ENCODE measurements at regions of chr1 and their contacts with region 1.

Region 1: GRCh38 chr1:23959041-23959460 is 577 bp upstream of the PNRC2 start:
- DNase-seq: peak; percentile 95
- H3K4me3 Mint-ChIP-seq: peak overlapping the region; percentile 100
- H3K27ac Mint-ChIP-seq: peak overlapping the region; percentile 100
- H3K4me1 Mint-ChIP-seq: peaks cover 55% of the 10 kb centered on the region
- H3K27me3 Mint-ChIP-seq: peaks cover 2% of the 10 kb centered on the region

Region 2: GRCh38 chr1:23790696-23791515 is 168.1 kb before region 1 on chr1 and contains the start of gene LYPLA2:
- CTCF ChIA-PET with region 1: interaction called, 3 read pairs
- POLR2A ChIA-PET with region 1: interaction called, 12 read pairs
- DNase-seq: peak; percentile 90
- H3K4me3 Mint-ChIP-seq: peak within 1 kb of the TSS; percentile 94
- H3K27ac Mint-ChIP-seq: peak within 1 kb of the TSS; percentile 91
- H3K4me1 Mint-ChIP-seq: peaks cover 32% of the 10 kb centered on the region
- H3K27me3 Mint-ChIP-seq: no peaks in the 10 kb centered on the region
- total RNA-seq, gene LYPLA2: 76.1 to 80.8 TPM

Region 3: GRCh38 chr1:23800400-23801337 is 158.4 kb before region 1 on chr1 and contains the start of gene GALE:
- CTCF ChIA-PET with region 1: no interaction called
- POLR2A ChIA-PET with region 1: interaction called, 28 read pairs
- DNase-seq: peak; percentile 98
- H3K4me3 Mint-ChIP-seq: peak within 1 kb of the TSS; percentile 96
- H3K27ac Mint-ChIP-seq: peak within 1 kb of the TSS; percentile 95
- H3K4me1 Mint-ChIP-seq: peaks cover 25% of the 10 kb centered on the region
- H3K27me3 Mint-ChIP-seq: no peaks in the 10 kb centered on the region
- total RNA-seq, gene GALE: 33.5 to 37.6 TPM

Region 4: DNA sequence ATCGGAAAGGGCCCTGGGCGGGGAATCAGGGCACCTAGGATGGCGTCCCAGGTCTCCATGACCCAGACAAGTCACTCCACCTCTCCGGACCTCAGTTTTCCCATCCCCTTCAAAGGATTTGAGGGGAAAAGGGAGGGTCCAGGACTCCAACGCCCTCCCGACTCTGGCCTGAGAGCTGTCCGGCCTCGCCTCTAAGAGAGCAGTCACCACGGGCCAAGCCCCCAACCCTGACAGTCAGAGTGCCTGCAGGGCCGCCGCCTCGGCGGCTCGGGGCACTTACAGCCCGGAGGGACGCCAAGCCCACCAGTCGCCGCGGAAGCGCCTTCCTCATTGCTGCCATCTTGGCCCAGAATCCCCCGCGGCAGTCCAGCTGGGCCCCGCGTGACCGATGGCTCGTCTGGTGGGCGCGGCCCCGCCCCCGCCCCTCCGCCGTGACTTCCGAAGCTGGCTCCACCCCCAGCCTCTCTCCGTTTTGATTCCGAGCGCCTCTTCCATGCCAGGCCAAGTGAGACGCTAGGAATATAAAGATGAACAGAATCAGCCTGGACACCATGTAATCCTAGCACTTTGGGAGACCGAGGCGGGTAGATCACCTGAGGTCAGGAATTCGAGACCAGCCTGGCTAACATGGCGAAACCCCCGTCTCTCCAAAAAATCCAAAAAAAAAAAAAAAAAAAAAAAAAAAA is 133.8 kb before region 1 on chr1 and contains the start of gene HMGCL:
- CTCF ChIA-PET with region 1: no interaction called
- POLR2A ChIA-PET with region 1: interaction called, 17 read pairs
- DNase-seq: peak; percentile 91
- H3K4me3 Mint-ChIP-seq: peak within 1 kb of the TSS; percentile 94
- H3K27ac Mint-ChIP-seq: peak within 1 kb of the TSS; percentile 87
- H3K4me1 Mint-ChIP-seq: peaks cover 25% of the 10 kb centered on the region
- H3K27me3 Mint-ChIP-seq: no peaks in the 10 kb centered on the region
- total RNA-seq, gene HMGCL: 33.5 to 35.7 TPM

Region 5: GRCh38 chr1:23923592-23924499 is 35.2 kb before region 1 on chr1:
- CTCF ChIA-PET with region 1: no interaction called
- POLR2A ChIA-PET with region 1: no interaction called
- DNase-seq: no peak
- H3K4me3 Mint-ChIP-seq: no peak overlapping the region
- H3K27ac Mint-ChIP-seq: no peak overlapping the region
- H3K4me1 Mint-ChIP-seq: peaks cover 2% of the 10 kb centered on the region
- H3K27me3 Mint-ChIP-seq: peaks cover 8% of the 10 kb centered on the region

Region 6: GRCh38 chr1:23979878-23980724 is 21.1 kb after region 1 on chr1 and contains the start of gene SRSF10:
- CTCF ChIA-PET with region 1: interaction called, 6 read pairs
- POLR2A ChIA-PET with region 1: interaction called, 515 read pairs
- DNase-seq: peak; percentile 99
- H3K4me3 Mint-ChIP-seq: peak within 1 kb of the TSS; percentile 91
- H3K27ac Mint-ChIP-seq: peak within 1 kb of the TSS; percentile 96
- H3K4me1 Mint-ChIP-seq: peaks cover 42% of the 10 kb centered on the region
- H3K27me3 Mint-ChIP-seq: no peaks in the 10 kb centered on the region
- total RNA-seq, gene SRSF10: 191 to 192 TPM

Region 7: GRCh38 chr1:23995431-23995837 is 36.4 kb after region 1 on chr1:
- CTCF ChIA-PET with region 1: no interaction called
- POLR2A ChIA-PET with region 1: no interaction called
- DNase-seq: no peak
- H3K4me3 Mint-ChIP-seq: no peak overlapping the region
- H3K27ac Mint-ChIP-seq: no peak overlapping the region
- H3K4me1 Mint-ChIP-seq: peaks cover 7% of the 10 kb centered on the region
- H3K27me3 Mint-ChIP-seq: peaks cover 2% of the 10 kb centered on the region

Measured in activated CD4-positive, alpha-beta memory T cell treated with anti-CD3 and anti-CD28 coated beads, Interleukin-2, amount 10 ng/mL, durations not matched to agents 7 days and 5 days (primary cell).